Heart right ventricle (tissue), 16 donors: ENCODE measurements at regions of chr12 and their contacts with region 1.

Region 1: DNA sequence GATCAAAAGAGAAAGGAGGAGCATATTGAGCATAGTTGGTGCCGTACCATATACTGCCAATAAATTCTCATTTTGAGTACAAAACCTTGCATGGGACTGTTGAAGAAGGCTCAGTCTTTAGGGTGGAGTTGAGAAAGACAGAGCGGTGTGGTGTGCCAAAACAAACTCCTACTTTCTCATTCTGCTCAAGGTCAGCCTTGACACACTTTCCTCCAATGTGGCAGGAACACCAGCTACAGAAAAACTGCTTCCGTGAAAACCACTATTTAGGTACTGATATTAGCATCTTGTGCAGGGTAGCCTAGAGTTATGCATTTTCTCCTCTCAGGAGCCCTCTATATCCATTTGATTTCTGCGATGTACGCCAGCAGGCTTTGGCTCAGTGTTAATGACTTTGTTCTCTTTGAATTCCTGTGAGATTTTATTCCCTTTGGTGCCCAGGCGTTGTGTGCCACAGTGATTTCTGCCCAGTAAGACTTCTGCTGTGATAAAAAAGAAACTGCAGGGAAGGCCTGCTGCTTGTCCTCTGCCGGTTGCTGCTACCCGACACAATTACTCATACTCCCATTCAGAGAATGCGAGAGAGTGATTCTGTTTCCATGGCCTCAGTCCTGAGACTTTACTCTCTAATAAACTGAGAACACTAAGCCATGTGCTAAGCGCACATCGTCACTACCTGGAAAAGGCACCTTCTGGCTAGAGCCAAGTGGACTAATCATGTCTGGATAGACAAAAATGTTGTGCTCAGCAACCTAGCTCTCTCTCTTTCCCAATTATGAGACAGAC is 88.3 kb upstream of the MDM1 start:
- DNase-seq: no peak
- ATAC-seq: peak in 7 of 8 donors; percentile 27 to 66 (median 53)
- H3K4me3 ChIP-seq: no peak overlapping the region
- H3K27ac ChIP-seq: peak overlapping the region in 6 of 10 donors; percentile 6 to 60 (median 48)
- H3K4me1 ChIP-seq: peaks cover 0 to 30% (median 11%) of the 10 kb centered on the region in 9 donors
- H3K27me3 ChIP-seq: no peaks in the 10 kb centered on the region
- CTCF ChIP-seq: no peak

Region 2: GRCh38 chr12:68538726-68539614 is 118.6 kb after region 1 on chr12:
- intact Hi-C with region 1: loop called in 1 of 10 experiments (anchors 10 kb)
- DNase-seq: peak; percentile 59 to 83
- ATAC-seq: peak; percentile 84 to 98 (median 95)
- H3K4me3 ChIP-seq: peak overlapping the region in 9 of 10 donors; percentile 1 to 45 (median 31)
- H3K27ac ChIP-seq: peak overlapping the region; percentile 60 to 87 (median 75)
- H3K4me1 ChIP-seq: peaks cover 0 to 25% (median 9%) of the 10 kb centered on the region in 9 donors
- H3K27me3 ChIP-seq: no peaks in the 10 kb centered on the region
- CTCF ChIP-seq: no peak

Region 3: GRCh38 chr12:69639400-69640016 is 1219.1 kb after region 1 on chr12:
- intact Hi-C with region 1: no loop called
- DNase-seq: peak; percentile 53 to 62
- ATAC-seq: peak; percentile 50 to 79 (median 60)
- H3K4me3 ChIP-seq: no peak overlapping the region
- H3K27ac ChIP-seq: no peak overlapping the region
- H3K4me1 ChIP-seq: peaks cover 0 to 8% (median 0%) of the 10 kb centered on the region in 9 donors
- H3K27me3 ChIP-seq: no peaks in the 10 kb centered on the region
- CTCF ChIP-seq: peak; percentile 63 to 93 (median 86)